Calu3 (cell line): ENCODE measurements at regions of chr7 and their contacts with region 1.

Region 1: DNA sequence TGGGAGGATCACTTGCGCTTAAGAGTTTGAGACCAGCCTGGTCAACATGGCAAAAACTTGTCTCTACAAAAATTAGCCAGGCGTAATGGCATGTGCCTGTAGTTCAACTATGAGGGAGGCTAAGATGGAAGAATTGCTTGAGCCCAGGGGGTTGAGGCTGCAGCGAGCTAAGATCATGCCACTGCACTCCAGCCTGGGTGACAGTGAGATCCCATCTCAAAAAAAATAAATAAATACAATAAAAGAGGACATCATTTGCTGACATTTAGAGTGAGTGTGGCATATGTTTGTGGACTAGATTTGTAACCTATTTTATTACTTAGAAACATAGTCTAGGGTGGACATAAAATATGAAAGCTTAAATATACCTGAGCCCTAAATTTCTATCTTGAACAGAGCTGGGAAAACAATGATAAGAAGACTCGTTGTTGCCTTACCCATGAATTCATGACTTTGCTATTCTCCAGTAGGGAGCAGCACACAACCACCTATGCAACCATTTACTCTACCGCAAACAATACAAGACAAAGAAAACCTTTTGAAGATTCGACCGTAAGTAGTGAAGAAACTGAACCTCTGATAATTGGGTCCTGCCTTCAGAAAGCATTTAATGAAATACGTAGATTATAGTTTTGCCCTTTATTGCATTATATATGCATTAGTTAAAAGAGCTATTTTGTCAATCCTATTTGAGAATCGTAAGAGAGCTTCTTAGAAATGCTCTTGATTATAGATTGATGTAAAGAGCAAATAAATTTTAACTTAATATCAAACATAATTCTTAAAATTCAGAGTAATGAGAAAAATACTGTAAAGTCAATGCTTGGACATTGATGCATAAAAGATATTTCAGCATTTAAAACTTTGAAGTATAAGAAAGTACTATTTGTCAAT is 83.5 kb downstream of the GNAT3 start:
- DNase-seq: peak; percentile 13
- H3K4me3 Mint-ChIP-seq: no peak overlapping the region
- H3K27ac Mint-ChIP-seq: no peak overlapping the region
- H3K4me1 Mint-ChIP-seq: no peaks in the 10 kb centered on the region
- H3K27me3 Mint-ChIP-seq: no peaks in the 10 kb centered on the region
- CTCF ChIP-seq: peak; percentile 32

Region 2: GRCh38 chr7:80410081-80410480 is 18.3 kb before region 1 on chr7:
- CTCF ChIA-PET with region 1: interaction called, 13 read pairs
- intact Hi-C with region 1: no loop called
- DNase-seq: no peak
- H3K4me3 Mint-ChIP-seq: no peak overlapping the region
- H3K27ac Mint-ChIP-seq: no peak overlapping the region
- H3K4me1 Mint-ChIP-seq: no peaks in the 10 kb centered on the region
- H3K27me3 Mint-ChIP-seq: no peaks in the 10 kb centered on the region
- CTCF ChIP-seq: no peak

Region 3: DNA sequence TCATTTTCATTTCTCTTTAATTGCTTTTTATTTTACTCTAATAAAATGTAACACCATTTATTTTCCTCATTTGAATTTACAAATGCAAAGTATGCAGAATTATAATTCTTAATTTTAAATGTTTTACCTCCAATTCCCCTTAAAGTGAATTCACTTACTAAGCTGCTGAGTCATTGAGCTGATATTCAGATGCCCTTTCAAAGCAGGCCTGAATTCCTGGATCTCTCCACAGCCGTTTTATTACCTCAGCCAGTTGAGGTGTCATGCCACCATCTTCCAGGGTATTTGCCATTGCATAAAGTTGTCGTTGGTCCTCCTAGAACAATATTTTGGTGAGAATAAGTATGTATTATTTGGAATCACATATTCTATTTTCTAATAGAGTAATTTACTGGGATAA is 50.3 kb after region 1 on chr7:
- CTCF ChIA-PET with region 1: no interaction called
- intact Hi-C with region 1: no loop called
- DNase-seq: no peak
- H3K4me3 Mint-ChIP-seq: no peak overlapping the region
- H3K27ac Mint-ChIP-seq: no peak overlapping the region
- H3K4me1 Mint-ChIP-seq: no peaks in the 10 kb centered on the region
- H3K27me3 Mint-ChIP-seq: no peaks in the 10 kb centered on the region
- CTCF ChIP-seq: no peak